Left ventricle myocardium superior (tissue), 1 donor: ENCODE measurements at regions of chr1 and their contacts with region 1.

Region 1: GRCh38 chr1:178031856-178032320 is 62.0 kb upstream of the RASAL2 start:
- DNase-seq: peak; percentile 85
- ATAC-seq: peak; percentile 81

Region 2: GRCh38 chr1:178189814-178190213 is 157.9 kb after region 1 on chr1:
- intact Hi-C with region 1: loop called (anchors 10 kb)
- DNase-seq: no peak
- ATAC-seq: peak; percentile 75

Region 3: DNA sequence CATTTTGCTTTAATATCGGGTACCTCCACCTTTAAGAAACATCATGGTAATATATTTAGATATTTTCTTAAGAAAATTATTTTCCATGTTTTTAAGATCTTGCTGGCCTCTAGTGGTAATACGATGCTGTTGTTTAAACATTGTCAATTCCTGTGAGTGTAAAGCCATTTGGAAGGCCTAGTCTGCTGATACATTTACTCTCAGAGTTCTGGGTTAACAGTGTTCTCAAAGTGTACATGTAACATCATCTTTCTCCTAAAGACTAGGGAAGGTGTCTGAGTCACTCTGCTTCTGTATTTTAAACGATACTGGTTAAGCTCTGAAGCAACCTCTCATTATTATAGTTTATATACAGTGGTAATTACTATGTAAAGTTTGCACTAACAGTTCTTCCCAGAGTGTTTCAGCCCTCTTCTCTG is 251.1 kb after region 1 on chr1:
- intact Hi-C with region 1: loop called (anchors 5 kb)
- DNase-seq: no peak
- ATAC-seq: no peak